Left lung (tissue), 14 donors: ENCODE measurements at regions of chr7 and their contacts with region 1.

Region 1: GRCh38 chr7:32062150-32062549 is 8.1 kb downstream of the PDE1C start:
- DNase-seq: peak in 2 of 4 donors; percentile 7 to 60
- ATAC-seq: no peak
- H3K4me3 ChIP-seq: no peak overlapping the region
- H3K27ac ChIP-seq: no peak overlapping the region
- H3K4me1 ChIP-seq: no peaks in the 10 kb centered on the region
- H3K27me3 ChIP-seq: no peaks in the 10 kb centered on the region
- CTCF ChIP-seq: peak; percentile 16 to 56

Region 2: DNA sequence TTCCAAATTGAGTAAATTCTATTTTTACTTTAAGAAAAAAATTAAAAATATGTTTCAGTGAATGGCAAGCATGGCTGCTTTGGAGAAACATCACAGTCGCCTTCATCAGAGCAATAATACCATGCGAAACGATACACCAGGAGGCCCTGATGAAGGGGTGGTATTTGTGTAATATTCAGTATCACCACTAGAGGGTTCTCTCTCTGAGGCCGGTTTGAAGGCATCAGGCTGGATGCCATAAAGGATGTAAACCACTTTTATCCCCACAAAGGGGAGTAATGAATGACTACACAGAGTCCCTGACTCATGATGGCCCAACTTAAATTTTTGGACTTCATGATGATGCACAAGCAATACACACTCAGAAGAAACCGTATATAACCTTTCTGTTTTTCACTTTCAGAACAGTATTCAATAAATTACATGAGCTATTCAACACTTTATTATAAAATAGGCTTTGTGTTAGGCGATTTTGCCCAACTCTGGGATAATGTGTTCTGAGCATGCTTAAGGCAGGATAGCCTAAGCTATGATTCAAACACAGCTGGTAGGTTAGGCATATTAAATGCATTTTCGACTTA is 279.6 kb before region 1 on chr7:
- intact Hi-C with region 1: loop called in 1 of 2 experiments (anchors 10 kb)
- DNase-seq: peak in 2 of 4 donors; percentile 7 to 17
- ATAC-seq: peak; percentile 86
- H3K4me3 ChIP-seq: no peak overlapping the region
- H3K27ac ChIP-seq: no peak overlapping the region
- H3K4me1 ChIP-seq: no peaks in the 10 kb centered on the region
- H3K27me3 ChIP-seq: no peaks in the 10 kb centered on the region
- CTCF ChIP-seq: peak; percentile 73 to 76

Region 3: DNA sequence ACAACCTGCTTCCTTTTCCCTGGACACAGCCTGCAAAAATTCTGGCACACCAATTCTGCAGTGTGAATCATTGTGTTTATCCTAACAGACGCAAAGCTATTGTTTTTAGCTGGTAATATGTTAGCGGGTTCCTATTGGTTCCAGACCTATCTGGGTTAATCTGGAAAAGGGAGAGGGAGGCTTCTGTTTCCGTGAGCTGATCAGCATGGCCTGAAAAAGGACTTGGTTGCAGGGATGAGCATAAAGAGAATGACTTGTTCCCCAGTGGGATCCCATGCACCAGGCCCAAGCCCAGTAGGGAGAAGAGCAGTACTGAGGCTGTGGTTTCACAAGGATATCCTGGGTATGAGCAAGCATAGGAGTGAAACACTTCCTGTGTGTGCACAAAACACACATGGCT is 70.3 kb before region 1 on chr7:
- intact Hi-C with region 1: no loop called
- DNase-seq: no peak
- ATAC-seq: no peak
- H3K4me3 ChIP-seq: no peak overlapping the region
- H3K27ac ChIP-seq: peak overlapping the region; percentile 16 to 31
- H3K4me1 ChIP-seq: no peaks in the 10 kb centered on the region
- H3K27me3 ChIP-seq: no peaks in the 10 kb centered on the region
- CTCF ChIP-seq: no peak